Caco-2 (cell line): ENCODE measurements at regions of chr4 and their contacts with region 1.

Region 1: GRCh38 chr4:52957220-52957686 is 95.1 kb downstream of the RASL11B start:
- DNase-seq: no peak
- H3K4me3 ChIP-seq: no peak overlapping the region
- H3K4me3 Mint-ChIP-seq: no peak overlapping the region
- H3K27ac Mint-ChIP-seq: no peak overlapping the region
- H3K4me1 ChIP-seq: peaks cover 13% of the 10 kb centered on the region; the same call in 1 of the 2 replicates
- H3K4me1 Mint-ChIP-seq: peaks cover 20% of the 10 kb centered on the region
- H3K27me3 ChIP-seq: no peaks in the 10 kb centered on the region
- H3K27me3 Mint-ChIP-seq: no peaks in the 10 kb centered on the region
- CTCF ChIP-seq: no peak

Region 2: GRCh38 chr4:52721968-52722815 is 235.1 kb before region 1 on chr4:
- CTCF ChIA-PET with region 1: no interaction called
- POLR2A ChIA-PET with region 1: no interaction called
- intact Hi-C with region 1: no loop called
- DNase-seq: peak; percentile 93 to 96
- H3K4me3 ChIP-seq: peak overlapping the region; percentile 55
- H3K4me3 Mint-ChIP-seq: peak overlapping the region; percentile 70
- H3K27ac Mint-ChIP-seq: peak overlapping the region; percentile 26
- H3K4me1 ChIP-seq: 0 out of 2 replicates have a peak, but pooled peaks cover 3% of the 10 kb centered on the region
- H3K4me1 Mint-ChIP-seq: peaks cover 7% of the 10 kb centered on the region
- H3K27me3 ChIP-seq: no peaks in the 10 kb centered on the region
- H3K27me3 Mint-ChIP-seq: no peaks in the 10 kb centered on the region
- CTCF ChIP-seq: no peak

Region 3: DNA sequence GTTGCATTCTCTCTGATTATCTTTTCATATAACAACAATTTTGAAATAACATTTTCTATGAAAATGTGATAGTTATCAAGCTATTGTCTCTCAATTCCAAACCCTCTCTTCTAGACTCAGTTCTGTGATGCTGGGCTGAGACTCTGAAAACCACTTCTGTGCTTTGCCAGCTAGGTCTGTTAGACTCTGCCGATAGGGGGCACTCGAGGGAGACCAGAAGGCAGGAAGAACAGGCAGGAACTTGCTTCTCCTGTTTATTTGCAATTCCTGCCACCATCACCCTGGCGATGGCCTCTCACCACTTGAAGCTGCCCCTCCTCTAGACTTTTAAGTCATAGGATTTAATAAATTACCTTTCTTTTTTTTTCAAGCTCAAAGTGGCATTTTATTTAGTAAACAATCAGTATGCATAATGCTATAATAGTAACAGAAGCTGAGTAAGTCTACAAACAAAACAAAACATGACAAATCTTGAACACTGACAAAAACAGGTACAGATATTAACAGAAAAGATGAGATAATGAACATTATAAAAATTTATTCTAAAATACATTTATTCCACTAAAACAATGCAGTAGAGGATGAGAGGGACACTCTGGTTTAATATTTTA is 45.5 kb before region 1 on chr4:
- CTCF ChIA-PET with region 1: no interaction called
- POLR2A ChIA-PET with region 1: no interaction called
- intact Hi-C with region 1: loop called (anchors 2 kb)
- DNase-seq: peak; percentile 80 to 82
- H3K4me3 ChIP-seq: no peak overlapping the region
- H3K4me3 Mint-ChIP-seq: no peak overlapping the region
- H3K27ac Mint-ChIP-seq: peak overlapping the region; percentile 39
- H3K4me1 ChIP-seq: peaks cover 58% of the 10 kb centered on the region
- H3K4me1 Mint-ChIP-seq: peaks cover 25% of the 10 kb centered on the region
- H3K27me3 ChIP-seq: no peaks in the 10 kb centered on the region
- H3K27me3 Mint-ChIP-seq: no peaks in the 10 kb centered on the region
- CTCF ChIP-seq: peak; percentile 52 to 67